CD8-positive, alpha-beta T cell (primary cell): ENCODE measurements at regions of chr20 and their contacts with region 1.

Region 1: DNA sequence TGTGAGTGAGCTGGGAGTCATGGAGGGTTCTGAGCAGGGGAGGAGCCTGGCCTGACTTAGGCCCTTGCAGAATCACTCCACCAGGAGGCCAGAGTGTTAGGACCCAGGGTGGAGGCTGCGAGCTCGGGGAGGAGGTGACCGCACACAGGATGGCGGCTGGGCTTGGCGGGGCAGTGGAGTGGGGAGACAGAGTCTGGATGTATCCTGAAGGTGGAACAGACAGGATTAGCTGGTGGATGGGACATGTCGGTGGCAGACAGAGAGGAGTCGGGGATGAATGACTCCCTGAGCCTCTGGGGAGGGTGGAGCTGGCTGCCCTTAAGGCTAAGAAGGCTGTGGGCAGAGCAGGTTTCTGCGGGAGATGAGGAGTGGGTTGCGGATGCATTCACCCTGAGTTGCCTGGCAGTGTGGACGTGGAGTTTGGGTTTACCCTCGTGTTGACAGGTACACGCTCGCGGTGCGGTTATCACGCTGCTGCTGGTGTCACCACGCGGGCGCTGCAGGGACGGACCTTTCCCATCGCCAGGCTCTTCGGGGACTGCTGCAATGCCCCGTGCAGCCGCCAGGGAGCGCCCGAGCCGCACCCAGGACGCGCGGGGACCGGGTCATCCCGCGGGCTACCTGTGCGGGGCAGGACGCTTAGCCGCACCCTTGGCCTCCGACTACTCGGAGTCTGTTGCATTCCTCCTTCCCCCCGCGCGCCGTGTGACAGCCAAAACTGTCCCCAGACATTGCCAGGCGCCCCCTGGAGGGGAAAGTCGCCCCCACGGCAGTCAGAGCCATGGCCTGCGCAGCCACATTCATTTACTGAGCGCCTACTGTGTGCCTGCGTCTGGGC is 43.0 kb upstream of the PTGIS start:
- DNase-seq: peak; percentile 52 to 83 (median 69)
- ATAC-seq: peak; percentile 74
- H3K4me3 ChIP-seq: no peak overlapping the region
- H3K4me3 Mint-ChIP-seq: peak overlapping the region; percentile 38
- H3K27ac ChIP-seq: no peak overlapping the region
- H3K27ac Mint-ChIP-seq: peak overlapping the region; percentile 13
- H3K4me1 ChIP-seq: peaks cover 5% of the 10 kb centered on the region
- H3K4me1 Mint-ChIP-seq: peaks cover 13% of the 10 kb centered on the region
- H3K27me3 ChIP-seq: no peaks in the 10 kb centered on the region
- H3K27me3 Mint-ChIP-seq: peaks cover 10% of the 10 kb centered on the region
- CTCF ChIP-seq: peak; percentile 93

Region 2: DNA sequence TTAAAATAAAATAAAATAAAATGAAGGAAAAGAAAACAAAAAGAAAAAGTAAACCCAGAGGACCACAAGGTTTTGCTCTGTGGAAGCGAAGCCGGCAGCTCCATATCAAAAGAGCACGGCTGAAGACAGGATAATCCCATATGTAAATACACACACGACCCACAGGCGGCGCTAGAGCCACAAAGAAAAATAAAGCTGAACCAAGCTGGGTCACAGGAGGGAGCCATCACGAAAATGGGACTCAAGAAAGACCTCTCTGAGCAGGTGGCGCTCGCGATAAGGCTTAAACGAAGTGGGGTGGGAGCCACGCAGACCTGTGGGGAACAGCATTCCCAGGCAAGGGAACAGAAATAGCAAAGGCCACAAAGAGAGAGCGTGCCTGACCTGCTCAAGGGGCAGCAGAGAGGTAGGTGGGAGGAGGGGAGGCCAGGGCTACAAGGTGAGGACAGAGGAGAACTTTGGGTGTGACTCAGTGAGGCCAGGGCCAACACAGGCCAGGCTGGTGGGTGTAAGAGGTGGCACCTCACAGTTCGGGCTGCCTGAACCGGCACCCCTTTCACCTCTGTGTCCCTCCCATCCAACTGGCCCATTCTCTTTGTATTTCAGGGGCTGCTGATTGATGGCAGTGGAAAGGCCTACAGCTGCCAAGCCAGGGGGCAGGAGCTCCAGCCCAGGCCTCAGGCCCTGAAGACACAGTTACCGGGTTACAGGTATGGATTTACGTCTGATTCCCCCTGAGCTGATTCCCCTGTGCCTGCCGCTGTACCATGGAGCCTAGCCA is 69.0 kb before region 1 on chr20:
- CTCF ChIA-PET with region 1: interaction called, 6 read pairs
- POLR2A ChIA-PET with region 1: interaction called, 4 read pairs
- intact Hi-C with region 1: loop called in 1 of 2 experiments (anchors 1 kb)
- DNase-seq: peak; percentile 23 to 78 (median 47)
- ATAC-seq: peak; percentile 65
- H3K4me3 ChIP-seq: no peak overlapping the region
- H3K4me3 Mint-ChIP-seq: no peak overlapping the region
- H3K27ac ChIP-seq: no peak overlapping the region
- H3K27ac Mint-ChIP-seq: no peak overlapping the region
- H3K4me1 ChIP-seq: no peaks in the 10 kb centered on the region
- H3K4me1 Mint-ChIP-seq: peaks cover 3% of the 10 kb centered on the region
- H3K27me3 ChIP-seq: peaks cover 0 to under 1% of the 10 kb centered on the region in 2 experiments
- H3K27me3 Mint-ChIP-seq: peaks cover 14% of the 10 kb centered on the region
- CTCF ChIP-seq: peak; percentile 53

Region 3: GRCh38 chr20:49595811-49596561 is 14.9 kb before region 1 on chr20:
- CTCF ChIA-PET with region 1: interaction called, 12 read pairs
- POLR2A ChIA-PET with region 1: no interaction called
- intact Hi-C with region 1: no loop called
- DNase-seq: peak in 3 of 9 experiments; percentile 8 to 40 (median 22)
- ATAC-seq: peak; percentile 62
- H3K4me3 ChIP-seq: no peak overlapping the region
- H3K4me3 Mint-ChIP-seq: no peak overlapping the region
- H3K27ac ChIP-seq: peak overlapping the region in 1 of 2 experiments; percentile 69
- H3K27ac Mint-ChIP-seq: peak overlapping the region; percentile 37
- H3K4me1 ChIP-seq: peaks cover 23% of the 10 kb centered on the region
- H3K4me1 Mint-ChIP-seq: peaks cover 33% of the 10 kb centered on the region
- H3K27me3 ChIP-seq: no peaks in the 10 kb centered on the region
- H3K27me3 Mint-ChIP-seq: peaks cover 4% of the 10 kb centered on the region
- CTCF ChIP-seq: no peak

Region 4: DNA sequence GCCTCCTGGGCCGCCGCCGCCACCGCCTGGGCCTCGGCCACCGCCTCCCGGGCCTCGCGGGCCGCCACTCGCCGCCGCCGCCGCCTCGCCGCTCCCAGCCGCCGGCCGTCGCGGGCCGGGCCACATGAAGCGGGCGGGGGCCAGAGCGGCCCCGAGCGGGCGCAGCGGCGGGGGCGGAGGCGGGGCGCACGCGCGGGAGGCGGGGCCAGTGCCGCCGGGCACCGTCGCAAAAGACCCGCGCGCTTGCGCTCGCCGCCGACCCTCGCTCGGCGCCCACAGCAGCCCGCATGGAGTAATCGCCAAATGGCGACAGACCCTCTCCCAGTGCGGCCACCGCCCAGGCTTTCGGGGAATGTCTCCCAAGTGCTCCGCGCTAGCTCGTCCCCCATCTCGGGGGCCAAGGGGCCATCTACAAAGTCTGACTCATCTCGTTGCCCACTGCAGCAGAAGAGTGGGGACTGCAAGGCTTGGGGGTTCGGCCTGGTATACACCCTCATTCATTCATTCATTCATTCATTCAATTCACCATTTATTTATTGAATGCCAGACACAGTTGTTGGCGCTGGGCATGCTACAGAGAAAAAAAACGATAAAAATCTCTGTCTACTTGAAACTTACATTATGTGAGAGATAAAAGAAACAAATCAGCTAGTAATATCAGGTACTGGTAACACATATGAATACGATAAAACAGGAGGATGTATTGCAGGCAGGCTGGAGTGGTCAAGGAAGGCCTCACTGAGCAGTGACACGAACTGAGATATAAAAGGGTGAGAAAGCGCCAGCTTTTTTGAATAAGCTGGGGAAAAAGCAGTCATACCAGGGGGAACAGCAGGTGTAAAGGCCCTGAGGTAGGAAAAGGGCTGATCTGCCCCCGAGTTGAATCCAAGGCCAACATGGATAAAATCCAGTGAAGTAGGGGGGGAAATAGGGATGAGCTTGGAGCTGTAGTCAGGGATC is 103.1 kb after region 1 on chr20 and contains the start of gene B4GALT5:
- CTCF ChIA-PET with region 1: interaction called, 5 read pairs
- POLR2A ChIA-PET with region 1: no interaction called
- intact Hi-C with region 1: loop called (anchors 5 kb)
- DNase-seq: peak; percentile 26 to 83 (median 59)
- ATAC-seq: peak; percentile 85
- H3K4me3 ChIP-seq: peak within 1 kb of the TSS; percentile 79 to 86
- H3K4me3 Mint-ChIP-seq: peak within 1 kb of the TSS; percentile 94
- H3K27ac ChIP-seq: peak within 1 kb of the TSS; percentile 51 to 75
- H3K27ac Mint-ChIP-seq: peak within 1 kb of the TSS; percentile 87
- H3K4me1 ChIP-seq: peaks cover 32% of the 10 kb centered on the region
- H3K4me1 Mint-ChIP-seq: peaks cover 49% of the 10 kb centered on the region
- H3K27me3 ChIP-seq: no peaks in the 10 kb centered on the region
- H3K27me3 Mint-ChIP-seq: no peaks in the 10 kb centered on the region
- CTCF ChIP-seq: no peak
- total RNA-seq, gene B4GALT5: 7.8 to 7.9 TPM

Region 5: GRCh38 chr20:49724408-49725223 is 113.7 kb after region 1 on chr20:
- CTCF ChIA-PET with region 1: no interaction called
- POLR2A ChIA-PET with region 1: no interaction called
- intact Hi-C with region 1: no loop called
- DNase-seq: peak in 2 of 9 experiments; percentile 18 to 44
- ATAC-seq: no peak
- H3K4me3 ChIP-seq: no peak overlapping the region
- H3K4me3 Mint-ChIP-seq: no peak overlapping the region
- H3K27ac ChIP-seq: no peak overlapping the region
- H3K27ac Mint-ChIP-seq: no peak overlapping the region
- H3K4me1 ChIP-seq: peaks cover 4% of the 10 kb centered on the region
- H3K4me1 Mint-ChIP-seq: peaks cover 13% of the 10 kb centered on the region
- H3K27me3 ChIP-seq: peaks cover 0 to 2% of the 10 kb centered on the region in 2 experiments
- H3K27me3 Mint-ChIP-seq: no peaks in the 10 kb centered on the region
- CTCF ChIP-seq: no peak

Region 6: DNA sequence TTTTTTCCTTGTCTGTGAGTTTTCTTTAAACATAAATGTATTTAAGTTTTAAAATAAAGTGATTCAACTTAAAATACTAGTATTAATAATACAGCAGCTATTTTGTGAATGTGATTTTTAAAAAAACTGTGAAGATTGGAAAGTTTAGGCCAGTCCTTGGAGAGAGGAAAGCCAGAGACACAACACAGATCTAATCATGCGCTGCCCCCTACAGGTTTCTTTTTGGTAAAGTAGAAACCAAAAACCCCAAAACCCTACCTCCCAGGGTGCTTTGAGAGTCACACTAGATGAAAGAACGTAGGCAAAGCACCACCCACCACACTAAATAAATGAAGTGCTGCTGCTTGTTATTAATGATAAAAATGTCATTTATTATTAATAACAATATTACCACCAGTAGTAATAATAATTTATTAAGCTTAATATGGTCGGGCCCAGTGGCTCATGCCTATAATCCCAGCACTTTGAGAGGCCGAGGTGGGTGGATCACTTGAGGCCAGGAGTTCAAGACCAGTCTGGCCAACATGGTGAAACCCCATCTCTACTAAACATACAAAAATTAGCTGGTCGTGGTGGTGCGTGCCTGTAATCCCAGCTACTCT is 235.4 kb after region 1 on chr20:
- CTCF ChIA-PET with region 1: interaction called, 152 read pairs
- POLR2A ChIA-PET with region 1: no interaction called
- intact Hi-C with region 1: loop called in 1 of 2 experiments (anchors 1 kb)
- DNase-seq: peak in 7 of 9 experiments; percentile 33 to 76 (median 55)
- ATAC-seq: peak; percentile 73
- H3K4me3 ChIP-seq: no peak overlapping the region
- H3K4me3 Mint-ChIP-seq: no peak overlapping the region
- H3K27ac ChIP-seq: no peak overlapping the region
- H3K27ac Mint-ChIP-seq: no peak overlapping the region
- H3K4me1 ChIP-seq: no peaks in the 10 kb centered on the region
- H3K4me1 Mint-ChIP-seq: peaks cover 9% of the 10 kb centered on the region
- H3K27me3 ChIP-seq: no peaks in the 10 kb centered on the region
- H3K27me3 Mint-ChIP-seq: no peaks in the 10 kb centered on the region
- CTCF ChIP-seq: peak; percentile 81

Region 7: GRCh38 chr20:49888345-49888966 is 277.5 kb after region 1 on chr20:
- CTCF ChIA-PET with region 1: interaction called, 12 read pairs
- POLR2A ChIA-PET with region 1: no interaction called
- intact Hi-C with region 1: loop called (anchors 1 kb)
- DNase-seq: peak; percentile 31 to 68 (median 58)
- ATAC-seq: peak; percentile 64
- H3K4me3 ChIP-seq: no peak overlapping the region
- H3K4me3 Mint-ChIP-seq: no peak overlapping the region
- H3K27ac ChIP-seq: no peak overlapping the region
- H3K27ac Mint-ChIP-seq: no peak overlapping the region
- H3K4me1 ChIP-seq: no peaks in the 10 kb centered on the region
- H3K4me1 Mint-ChIP-seq: peaks cover 2% of the 10 kb centered on the region
- H3K27me3 ChIP-seq: no peaks in the 10 kb centered on the region
- H3K27me3 Mint-ChIP-seq: no peaks in the 10 kb centered on the region
- CTCF ChIP-seq: peak; percentile 66

Region 8: DNA sequence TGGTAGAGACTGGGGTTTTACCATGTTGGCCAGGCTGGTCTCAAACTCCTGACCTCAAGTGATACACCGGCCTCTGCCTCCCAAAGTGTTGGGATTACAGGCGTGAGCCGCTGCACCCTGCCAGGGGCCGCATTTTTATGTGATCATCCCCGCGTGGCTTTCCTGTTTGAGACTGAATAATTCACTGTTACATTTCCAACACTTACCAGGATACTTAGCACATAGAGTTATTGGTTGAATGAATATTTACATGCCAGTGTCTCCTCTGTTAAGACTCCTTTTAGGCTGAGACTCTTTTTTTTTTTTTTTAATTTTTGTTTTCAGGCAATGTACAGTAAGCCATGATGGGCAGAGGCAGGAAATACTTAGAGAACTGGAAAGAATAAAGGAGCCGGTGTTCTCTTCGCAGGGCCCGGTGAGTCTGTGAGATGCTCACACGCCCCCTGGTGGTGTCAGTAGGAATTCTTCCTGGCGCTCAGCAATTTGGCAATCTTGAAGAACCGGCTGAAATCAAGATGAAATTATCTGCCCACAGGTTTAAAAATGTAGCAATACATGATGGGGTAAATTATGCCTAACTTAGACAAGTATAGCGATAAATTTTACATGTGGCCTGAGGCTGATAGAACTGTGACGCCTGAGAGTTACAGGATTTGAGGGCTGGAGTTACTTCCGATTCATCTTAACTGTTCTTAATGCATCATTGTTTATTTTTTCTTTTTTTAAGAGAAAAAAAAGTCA is 317.7 kb after region 1 on chr20:
- CTCF ChIA-PET with region 1: interaction called, 3 read pairs
- POLR2A ChIA-PET with region 1: no interaction called
- intact Hi-C with region 1: loop called (anchors 1 kb)
- DNase-seq: peak; percentile 57 to 88 (median 82)
- ATAC-seq: peak; percentile 99
- H3K4me3 ChIP-seq: no peak overlapping the region
- H3K4me3 Mint-ChIP-seq: peak overlapping the region; percentile 27
- H3K27ac ChIP-seq: no peak overlapping the region
- H3K27ac Mint-ChIP-seq: peak overlapping the region; percentile 46
- H3K4me1 ChIP-seq: peaks cover 6% of the 10 kb centered on the region
- H3K4me1 Mint-ChIP-seq: peaks cover 8% of the 10 kb centered on the region
- H3K27me3 ChIP-seq: no peaks in the 10 kb centered on the region
- H3K27me3 Mint-ChIP-seq: peaks cover 2% of the 10 kb centered on the region
- CTCF ChIP-seq: peak; percentile 95